Endothelial cell of umbilical vein (primary cell): ENCODE measurements at regions of chr6 and their contacts with region 1.

Region 1: DNA sequence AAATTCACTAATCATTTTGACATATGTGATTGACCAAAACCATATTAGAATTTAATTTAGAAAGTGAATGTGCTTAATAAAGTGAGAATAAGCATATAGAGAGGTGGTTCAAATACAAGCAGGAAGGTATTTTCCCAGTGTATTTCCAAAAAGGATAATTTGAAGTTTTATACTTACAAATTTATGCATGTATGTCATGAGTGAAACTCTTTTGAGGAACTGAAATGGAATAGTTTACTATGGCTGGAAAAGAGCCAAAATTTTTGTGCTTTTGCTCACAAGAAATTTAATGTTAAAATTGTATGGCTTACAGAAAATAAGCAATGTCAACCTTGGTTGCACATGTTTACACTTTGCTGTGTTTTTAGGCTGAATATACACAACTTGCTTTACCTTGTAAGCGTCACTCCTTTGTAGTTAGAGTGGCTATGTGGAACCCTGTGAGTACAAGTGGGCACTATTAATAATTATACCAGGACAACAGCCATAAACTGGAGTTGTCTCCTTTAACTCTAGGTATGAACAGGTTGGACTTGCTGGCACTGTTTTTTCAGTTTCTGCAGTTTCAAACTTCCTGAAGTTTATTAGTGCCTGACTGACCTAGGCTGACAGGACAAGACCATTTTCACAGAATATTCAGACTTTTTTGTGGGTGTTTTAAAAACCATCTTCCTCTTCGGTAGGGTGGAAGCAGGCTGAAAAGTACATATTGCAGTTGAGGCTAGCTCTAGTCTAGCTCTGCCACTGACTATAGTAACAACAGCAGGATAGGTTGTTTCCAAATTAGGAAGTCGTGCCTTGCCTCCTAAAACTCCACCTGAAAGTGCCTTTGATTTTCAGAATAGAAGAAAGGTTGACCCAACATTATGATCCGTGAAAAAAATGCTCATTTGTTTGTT is 6.0 kb downstream of the AFDN start:
- DNase-seq: no peak
- H3K4me3 ChIP-seq: no peak overlapping the region
- H3K27ac ChIP-seq: no peak overlapping the region
- H3K4me1 ChIP-seq: peaks cover 27% of the 10 kb centered on the region
- H3K27me3 ChIP-seq: no peaks in the 10 kb centered on the region
- CTCF ChIP-seq: no peak
- POLR2A ChIP-seq: no peak

Region 2: DNA sequence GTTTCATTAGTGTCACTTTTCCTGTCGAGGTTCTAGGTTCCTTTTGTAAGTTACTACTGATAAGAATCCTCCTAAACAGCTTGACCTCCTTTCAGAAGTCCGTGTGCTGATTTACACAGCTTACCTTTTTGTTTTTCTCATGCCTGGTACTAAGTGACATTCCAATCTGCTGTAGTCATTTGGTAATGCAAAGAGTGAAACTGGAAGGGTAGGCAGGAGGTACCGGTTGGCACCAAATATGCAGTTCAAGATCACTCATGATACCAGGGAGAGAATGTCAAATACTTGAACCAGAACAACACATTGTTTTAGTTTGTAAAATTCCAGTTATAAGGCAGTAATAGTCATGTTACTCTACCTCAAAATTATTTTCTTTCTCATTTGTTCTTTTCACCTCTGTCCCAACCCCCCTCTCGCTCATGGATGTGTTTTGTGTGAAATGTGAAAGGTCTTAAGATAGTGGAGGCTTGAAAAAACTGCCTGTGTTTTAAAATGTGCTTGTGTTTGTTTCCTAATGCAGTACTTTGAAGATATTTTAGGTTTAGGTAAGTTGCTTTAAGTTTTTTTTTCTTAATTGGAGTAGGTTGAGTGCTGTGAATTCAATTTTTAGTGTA is 17.2 kb after region 1 on chr6:
- CTCF ChIA-PET with region 1: interaction called, 6 read pairs
- POLR2A ChIA-PET with region 1: no interaction called
- dilution Hi-C with region 1: no loop called
- intact Hi-C with region 1: loop called (anchors 2 kb)
- DNase-seq: peak; percentile 71
- H3K4me3 ChIP-seq: peak overlapping the region in 1 of 3 experiments; percentile 44
- H3K27ac ChIP-seq: peak overlapping the region; percentile 35
- H3K4me1 ChIP-seq: peaks cover 19% of the 10 kb centered on the region
- H3K27me3 ChIP-seq: no peaks in the 10 kb centered on the region
- CTCF ChIP-seq: no peak
- POLR2A ChIP-seq: no peak

Region 3: GRCh38 chr6:167913699-167914098 is 81.0 kb after region 1 on chr6:
- CTCF ChIA-PET with region 1: no interaction called
- POLR2A ChIA-PET with region 1: no interaction called
- dilution Hi-C with region 1: no loop called
- intact Hi-C with region 1: no loop called
- DNase-seq: no peak
- H3K4me3 ChIP-seq: no peak overlapping the region
- H3K27ac ChIP-seq: no peak overlapping the region
- H3K4me1 ChIP-seq: no peaks in the 10 kb centered on the region
- H3K27me3 ChIP-seq: no peaks in the 10 kb centered on the region
- CTCF ChIP-seq: no peak
- POLR2A ChIP-seq: no peak